Endothelial cell of umbilical vein (primary cell): ENCODE measurements at regions of chr7 and their contacts with region 1.

Region 1: DNA sequence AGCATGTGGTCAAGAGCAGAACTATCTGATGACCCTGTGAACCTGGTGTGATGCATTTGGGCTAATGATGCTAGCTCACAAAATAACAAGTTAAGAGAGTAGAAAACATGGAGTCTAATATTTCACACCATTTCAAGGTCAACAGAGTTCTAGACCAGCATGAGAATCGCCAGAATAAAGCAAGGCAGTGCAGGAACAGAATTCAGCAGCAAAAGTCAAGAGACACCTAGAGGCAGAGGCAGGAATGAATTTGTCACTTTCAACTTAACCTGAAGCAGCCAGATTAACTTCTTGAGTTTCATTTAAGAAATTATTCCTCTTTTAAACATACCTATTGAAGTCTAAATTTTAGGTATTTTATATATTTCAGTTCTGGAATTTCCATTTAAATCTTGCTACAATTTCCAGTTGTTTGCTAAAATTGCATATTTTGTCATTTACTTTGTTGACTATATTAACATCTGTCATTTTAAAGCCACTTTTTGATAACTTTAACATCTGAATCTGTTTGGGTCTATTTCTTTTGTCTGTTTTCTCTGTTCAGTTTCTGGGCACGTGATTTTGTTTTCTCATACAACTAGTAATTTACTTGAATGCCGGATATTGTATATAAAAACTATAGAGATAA is 44.2 kb upstream of the PRSS58 start:
- DNase-seq: no peak
- H3K4me3 ChIP-seq: no peak overlapping the region
- H3K27ac ChIP-seq: no peak overlapping the region
- H3K4me1 ChIP-seq: no peaks in the 10 kb centered on the region
- H3K27me3 ChIP-seq: no peaks in the 10 kb centered on the region
- CTCF ChIP-seq: peak in 1 of 2 donors; percentile 32
- POLR2A ChIP-seq: no peak

Region 2: GRCh38 chr7:141975806-141976523 is 326.1 kb before region 1 on chr7:
- CTCF ChIA-PET with region 1: no interaction called
- POLR2A ChIA-PET with region 1: no interaction called
- dilution Hi-C with region 1: no loop called
- intact Hi-C with region 1: loop called (anchors 1 kb)
- DNase-seq: peak; percentile 12
- H3K4me3 ChIP-seq: no peak overlapping the region
- H3K27ac ChIP-seq: no peak overlapping the region
- H3K4me1 ChIP-seq: no peaks in the 10 kb centered on the region
- H3K27me3 ChIP-seq: no peaks in the 10 kb centered on the region
- CTCF ChIP-seq: peak; percentile 63 to 73
- POLR2A ChIP-seq: no peak

Region 3: GRCh38 chr7:142323706-142324105 is 21.7 kb after region 1 on chr7:
- CTCF ChIA-PET with region 1: interaction called, 10 read pairs
- POLR2A ChIA-PET with region 1: interaction called, 3 read pairs
- dilution Hi-C with region 1: no loop called
- intact Hi-C with region 1: no loop called
- DNase-seq: no peak
- H3K4me3 ChIP-seq: no peak overlapping the region
- H3K27ac ChIP-seq: no peak overlapping the region
- H3K4me1 ChIP-seq: no peaks in the 10 kb centered on the region
- H3K27me3 ChIP-seq: no peaks in the 10 kb centered on the region
- CTCF ChIP-seq: peak in 1 of 2 donors; percentile 33
- POLR2A ChIP-seq: no peak

Region 4: DNA sequence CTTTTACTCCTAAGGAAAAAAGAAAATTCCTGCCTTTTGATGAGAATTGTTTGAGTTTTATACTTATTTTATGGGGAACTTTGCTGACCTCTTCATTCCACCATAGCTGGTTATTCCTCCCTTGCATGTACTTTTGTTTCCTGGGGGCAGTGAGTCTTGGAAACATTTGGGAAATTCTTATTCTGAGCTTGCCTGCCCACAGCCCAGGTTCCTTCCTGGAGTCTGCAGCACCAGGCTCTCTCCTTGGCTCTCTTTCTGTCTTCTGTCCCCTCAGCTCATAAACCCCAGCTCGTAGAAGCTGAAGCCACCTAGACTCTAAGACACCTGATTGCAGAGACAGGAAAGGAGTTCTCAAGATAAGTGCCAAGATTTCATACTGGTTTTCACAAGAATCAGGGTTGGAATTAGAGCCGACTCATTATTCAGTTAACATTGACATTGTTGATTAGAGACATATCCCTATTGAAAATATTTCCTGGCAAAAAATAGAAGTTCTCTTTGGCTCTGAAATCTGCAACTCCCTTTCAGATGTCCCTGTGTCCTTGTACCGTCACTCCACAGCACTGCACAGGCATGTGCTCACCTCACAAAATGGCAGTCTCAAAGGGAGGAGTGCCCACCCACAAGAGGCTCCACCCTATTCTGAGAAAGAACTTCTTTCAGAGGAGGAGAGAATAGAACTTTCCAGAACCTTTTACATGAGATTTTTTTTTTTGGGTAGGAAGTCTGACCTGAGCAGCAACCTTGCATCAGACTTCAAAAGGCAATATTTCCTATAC is 379.5 kb after region 1 on chr7:
- CTCF ChIA-PET with region 1: no interaction called
- POLR2A ChIA-PET with region 1: no interaction called
- dilution Hi-C with region 1: no loop called
- intact Hi-C with region 1: no loop called
- DNase-seq: no peak
- H3K4me3 ChIP-seq: no peak overlapping the region
- H3K27ac ChIP-seq: no peak overlapping the region
- H3K4me1 ChIP-seq: no peaks in the 10 kb centered on the region
- H3K27me3 ChIP-seq: peaks cover 0 to 6% of the 10 kb centered on the region in 2 experiments
- CTCF ChIP-seq: no peak
- POLR2A ChIP-seq: no peak